Head of caudate nucleus (tissue), 42 donors: ENCODE measurements at regions of chr2 and their contacts with region 1.

Region 1: GRCh38 chr2:212548450-212548819 is 9.8 kb upstream of the ERBB4 start:
- DNase-seq: peak in 16 of 42 donors; percentile 2 to 76 (median 33)

Region 2: DNA sequence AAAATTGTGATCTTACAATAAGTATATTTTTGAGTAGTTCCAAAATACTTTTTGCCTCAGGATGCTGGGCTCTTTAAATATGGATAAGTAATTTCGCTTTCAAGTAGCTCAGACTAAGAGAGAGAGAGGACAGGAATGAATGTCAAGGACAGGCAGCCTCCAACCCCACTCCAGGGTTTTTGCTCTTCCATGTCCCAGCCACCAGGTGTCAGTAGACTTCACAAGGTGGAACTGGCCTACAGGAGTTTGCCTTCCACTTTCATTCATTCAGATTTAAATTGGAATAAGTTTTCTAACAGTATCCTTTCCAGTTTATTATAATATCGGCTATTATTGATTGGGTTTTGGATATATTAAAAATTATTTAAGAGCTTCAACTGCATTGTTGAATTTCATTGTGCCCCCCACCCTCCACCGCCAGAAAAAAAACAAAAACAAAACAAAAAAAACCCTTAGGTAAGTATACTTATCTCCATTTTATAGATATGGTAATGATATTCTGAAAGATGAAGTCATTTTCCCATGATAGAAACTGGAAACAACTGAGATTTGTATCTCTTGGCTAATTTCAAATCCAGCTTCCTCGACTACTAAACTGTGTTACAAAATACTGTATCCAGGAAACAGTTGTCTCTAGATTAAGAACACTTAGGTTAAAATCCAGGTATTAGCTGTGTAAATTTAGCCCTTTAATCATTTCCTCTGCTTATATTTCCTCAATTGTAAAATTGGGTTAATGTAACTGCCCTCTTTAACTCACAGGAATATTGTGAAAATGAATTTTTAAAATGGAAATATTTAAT is 802.9 kb before region 1 on chr2:
- intact Hi-C with region 1: loop called (anchors 10 kb)
- DNase-seq: peak in 41 of 42 donors; percentile 8 to 85 (median 60)

Region 3: GRCh38 chr2:212299943-212300342 is 248.5 kb before region 1 on chr2:
- intact Hi-C with region 1: no loop called
- DNase-seq: no peak

Region 4: DNA sequence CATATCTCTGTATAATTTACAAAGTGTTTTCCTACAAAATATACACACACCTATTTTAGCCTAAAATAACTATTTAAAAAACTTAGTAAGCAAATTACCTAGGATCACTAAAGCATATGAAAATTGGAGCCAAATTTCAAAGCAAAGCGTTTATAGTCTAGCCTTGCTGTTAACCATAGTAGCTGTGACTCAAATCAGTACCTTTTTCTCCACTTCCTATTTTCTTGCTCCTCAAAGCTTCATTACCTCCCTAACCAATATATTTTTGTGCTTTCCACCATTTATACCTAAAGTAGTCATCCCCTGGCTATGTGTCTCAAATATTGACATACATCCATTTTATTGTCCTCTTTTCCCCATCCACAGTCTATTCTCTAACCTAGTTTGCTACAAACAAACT is 83.0 kb before region 1 on chr2:
- intact Hi-C with region 1: no loop called
- DNase-seq: no peak

Region 5: DNA sequence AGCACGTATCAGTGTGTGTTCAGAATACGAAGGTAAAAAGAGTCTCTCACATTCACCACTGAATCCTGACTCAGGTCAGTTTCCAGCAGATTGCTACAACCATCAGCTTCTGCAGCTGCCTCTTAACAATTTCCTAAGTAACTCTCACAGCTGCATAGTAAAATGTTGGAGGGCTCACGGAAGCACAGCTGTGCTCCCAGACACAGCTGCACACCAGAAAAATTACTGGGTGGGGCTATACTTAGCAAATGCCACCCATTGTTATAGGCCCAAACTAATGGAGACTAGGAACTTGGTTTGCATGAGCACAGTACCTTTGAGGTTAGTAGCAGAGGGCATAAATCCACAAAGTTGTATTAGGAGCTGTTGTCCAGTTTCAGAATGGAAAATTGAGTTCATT is 144.0 kb after region 1 on chr2:
- intact Hi-C with region 1: no loop called
- DNase-seq: no peak